CD8-positive, alpha-beta T cell (primary cell): ENCODE measurements at regions of chr12 and their contacts with region 1.

Region 1: DNA sequence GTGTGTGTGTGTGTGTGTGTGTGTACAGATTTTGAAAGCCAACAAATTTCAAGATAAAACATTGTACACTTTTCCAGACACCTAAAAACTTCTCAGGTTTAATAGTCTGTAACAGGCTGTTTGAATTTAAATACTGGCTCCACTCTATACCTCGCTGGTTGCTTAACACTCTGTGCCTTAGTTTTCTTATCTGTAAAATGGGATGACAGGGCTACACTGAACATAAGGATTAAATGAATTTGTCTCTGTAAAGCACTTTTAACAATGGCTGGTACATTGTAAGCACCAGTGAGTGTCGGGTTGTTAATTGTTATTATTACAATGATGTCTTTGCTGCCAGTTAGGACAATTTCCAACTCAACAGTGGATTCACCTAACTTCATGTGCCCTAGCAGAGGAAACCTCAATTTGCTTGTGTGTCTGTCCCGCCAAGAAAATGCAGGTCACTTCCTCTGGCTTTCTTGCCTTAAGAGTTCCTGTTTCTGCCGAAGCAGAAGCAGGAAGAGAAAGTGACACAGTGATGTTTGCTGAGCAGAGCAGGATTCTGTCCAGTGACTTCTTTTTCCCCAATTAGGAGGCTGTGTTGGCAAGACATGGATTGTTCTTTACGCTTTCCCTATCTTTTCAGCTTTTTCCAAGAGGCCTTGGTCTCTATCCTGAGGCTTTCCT is 154.0 kb upstream of the ATP2B1 start:
- DNase-seq: peak in 7 of 9 experiments; percentile 27 to 82 (median 50)
- ATAC-seq: peak; percentile 30
- H3K4me3 ChIP-seq: peak overlapping the region; percentile 29 to 46
- H3K4me3 Mint-ChIP-seq: peak overlapping the region; percentile 80
- H3K27ac ChIP-seq: peak overlapping the region; percentile 79 to 88
- H3K27ac Mint-ChIP-seq: peak overlapping the region; percentile 93
- H3K4me1 ChIP-seq: peaks cover 36% of the 10 kb centered on the region
- H3K4me1 Mint-ChIP-seq: peaks cover 54% of the 10 kb centered on the region
- H3K27me3 ChIP-seq: no peaks in the 10 kb centered on the region
- H3K27me3 Mint-ChIP-seq: no peaks in the 10 kb centered on the region
- CTCF ChIP-seq: no peak

Region 2: GRCh38 chr12:89663577-89664357 is 198.9 kb before region 1 on chr12:
- CTCF ChIA-PET with region 1: no interaction called
- POLR2A ChIA-PET with region 1: no interaction called
- intact Hi-C with region 1: loop called in 1 of 2 experiments (anchors 1 kb)
- DNase-seq: peak in 2 of 9 experiments; percentile 17 to 24
- ATAC-seq: peak; percentile 63
- H3K4me3 ChIP-seq: no peak overlapping the region
- H3K4me3 Mint-ChIP-seq: peak overlapping the region; percentile 0
- H3K27ac ChIP-seq: no peak overlapping the region
- H3K27ac Mint-ChIP-seq: peak overlapping the region; percentile 3
- H3K4me1 ChIP-seq: peaks cover 41% of the 10 kb centered on the region
- H3K4me1 Mint-ChIP-seq: peaks cover 72% of the 10 kb centered on the region
- H3K27me3 ChIP-seq: no peaks in the 10 kb centered on the region
- H3K27me3 Mint-ChIP-seq: no peaks in the 10 kb centered on the region
- CTCF ChIP-seq: no peak

Region 3: DNA sequence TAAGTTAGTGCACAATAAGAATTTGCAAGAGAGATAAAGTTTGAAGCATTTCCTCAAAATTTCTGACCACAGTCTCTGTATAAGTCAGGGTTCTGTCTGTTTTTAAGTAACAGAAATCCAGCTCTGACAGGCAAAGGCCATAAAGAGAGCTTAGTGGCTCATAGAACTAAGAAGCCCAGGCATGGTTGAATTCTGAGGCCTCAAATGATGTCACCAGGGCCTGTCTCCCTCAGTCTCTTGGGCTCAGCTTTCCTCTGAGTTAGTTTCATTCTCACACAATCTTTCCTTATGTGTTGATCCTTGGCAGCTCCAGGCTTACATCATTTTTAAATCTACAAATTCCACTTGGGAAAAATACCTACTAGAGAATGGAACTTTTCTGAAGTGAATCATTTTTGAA is 19.4 kb after region 1 on chr12:
- CTCF ChIA-PET with region 1: interaction called, 4 read pairs
- POLR2A ChIA-PET with region 1: interaction called, 14 read pairs
- intact Hi-C with region 1: loop called (anchors 1 to 2 kb)
- DNase-seq: peak in 2 of 9 experiments; percentile 30 to 52
- ATAC-seq: peak; percentile 37
- H3K4me3 ChIP-seq: no peak overlapping the region
- H3K4me3 Mint-ChIP-seq: no peak overlapping the region
- H3K27ac ChIP-seq: peak overlapping the region; percentile 47 to 76
- H3K27ac Mint-ChIP-seq: peak overlapping the region; percentile 95
- H3K4me1 ChIP-seq: peaks cover 49% of the 10 kb centered on the region
- H3K4me1 Mint-ChIP-seq: peaks cover 60% of the 10 kb centered on the region
- H3K27me3 ChIP-seq: no peaks in the 10 kb centered on the region
- H3K27me3 Mint-ChIP-seq: no peaks in the 10 kb centered on the region
- CTCF ChIP-seq: no peak

Region 4: DNA sequence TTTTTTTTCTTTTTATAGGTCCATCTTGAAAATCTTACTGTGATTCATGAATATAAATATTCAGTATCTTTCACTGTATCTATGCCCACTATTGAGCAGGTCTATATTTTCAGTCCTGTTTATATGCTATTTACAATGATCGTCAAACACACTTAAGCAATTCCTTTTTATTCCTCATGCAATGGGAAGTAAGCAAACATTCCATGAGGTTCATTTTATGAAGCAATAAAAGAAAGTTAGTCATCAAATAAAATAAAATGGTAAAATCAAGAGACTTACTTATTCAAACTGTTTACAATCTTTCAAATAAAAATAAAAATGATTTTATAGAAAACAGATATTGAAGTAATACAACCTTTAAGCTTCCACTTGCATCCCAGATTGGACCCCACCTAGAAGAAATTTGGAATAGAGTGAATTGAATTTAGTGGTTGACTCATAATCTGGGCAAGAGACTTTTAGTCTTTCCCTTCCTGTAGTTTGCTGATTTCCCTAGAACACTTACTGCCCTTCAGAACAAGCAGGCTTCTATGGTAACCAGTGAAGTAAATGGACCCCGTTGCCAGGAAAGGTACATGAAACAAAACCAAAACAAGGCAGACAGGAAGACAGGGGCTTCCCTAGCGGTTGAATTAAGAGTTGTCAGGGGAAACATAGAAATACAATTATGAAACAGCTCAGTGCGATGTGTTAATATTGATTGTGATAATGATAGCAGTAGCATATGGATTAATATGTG is 87.0 kb after region 1 on chr12:
- CTCF ChIA-PET with region 1: interaction called, 4 read pairs
- POLR2A ChIA-PET with region 1: interaction called, 4 read pairs
- intact Hi-C with region 1: loop called (anchors 1 to 2 kb)
- DNase-seq: peak in 8 of 9 experiments; percentile 23 to 95 (median 55)
- ATAC-seq: peak; percentile 90
- H3K4me3 ChIP-seq: no peak overlapping the region
- H3K4me3 Mint-ChIP-seq: peak overlapping the region; percentile 53
- H3K27ac ChIP-seq: peak overlapping the region; percentile 25 to 53
- H3K27ac Mint-ChIP-seq: peak overlapping the region; percentile 75
- H3K4me1 ChIP-seq: peaks cover 36% of the 10 kb centered on the region
- H3K4me1 Mint-ChIP-seq: peaks cover 47% of the 10 kb centered on the region
- H3K27me3 ChIP-seq: no peaks in the 10 kb centered on the region
- H3K27me3 Mint-ChIP-seq: no peaks in the 10 kb centered on the region
- CTCF ChIP-seq: peak; percentile 45

Region 5: DNA sequence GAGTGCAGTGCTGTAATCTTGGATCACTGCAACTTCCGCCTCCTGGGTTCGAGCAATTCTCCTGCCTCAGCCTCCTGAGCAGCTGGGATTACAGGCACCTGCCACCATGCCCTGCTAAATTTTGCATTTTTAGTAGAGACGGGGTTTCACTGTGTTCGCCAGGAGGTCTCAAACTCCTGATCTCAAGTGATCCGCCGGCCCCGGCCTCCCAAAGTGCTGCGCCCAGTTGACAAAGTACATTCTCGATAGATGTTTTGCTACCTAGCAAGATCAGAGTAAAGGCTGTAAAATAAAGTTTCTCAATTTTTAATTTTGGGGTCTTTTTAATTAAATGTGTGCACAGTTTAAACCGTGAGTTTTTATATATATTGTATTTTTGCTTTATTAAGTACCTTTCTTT is 843.4 kb after region 1 on chr12:
- CTCF ChIA-PET with region 1: no interaction called
- POLR2A ChIA-PET with region 1: no interaction called
- intact Hi-C with region 1: no loop called
- DNase-seq: no peak
- ATAC-seq: no peak
- H3K4me3 ChIP-seq: no peak overlapping the region
- H3K4me3 Mint-ChIP-seq: no peak overlapping the region
- H3K27ac ChIP-seq: no peak overlapping the region
- H3K27ac Mint-ChIP-seq: no peak overlapping the region
- H3K4me1 ChIP-seq: no peaks in the 10 kb centered on the region
- H3K4me1 Mint-ChIP-seq: no peaks in the 10 kb centered on the region
- H3K27me3 ChIP-seq: no peaks in the 10 kb centered on the region
- H3K27me3 Mint-ChIP-seq: no peaks in the 10 kb centered on the region
- CTCF ChIP-seq: no peak